GM12878 (cell line): ENCODE measurements at regions of chr1 and their contacts with region 1.

Region 1: GRCh38 chr1:25904943-25905679 is 1.1 kb downstream of the STMN1 start:
- DNase-seq: peak; percentile 63
- ATAC-seq: peak; percentile 91
- H3K4me3 ChIP-seq: peak overlapping the region; percentile 100
- H3K27ac ChIP-seq: peak overlapping the region; percentile 94
- H3K4me1 ChIP-seq: peaks cover 5% of the 10 kb centered on the region; the same call in 1 of the 2 replicates
- H3K27me3 ChIP-seq: no peaks in the 10 kb centered on the region; a peak in 3 of 4 replicates
- CTCF ChIP-seq: peak in 1 of 3 experiments; percentile 24; a peak in 1 of 6 replicates
- EP300 ChIP-seq: no peak
- POLR2A ChIP-seq: no peak
- RAD21 ChIP-seq: no peak

Region 2: DNA sequence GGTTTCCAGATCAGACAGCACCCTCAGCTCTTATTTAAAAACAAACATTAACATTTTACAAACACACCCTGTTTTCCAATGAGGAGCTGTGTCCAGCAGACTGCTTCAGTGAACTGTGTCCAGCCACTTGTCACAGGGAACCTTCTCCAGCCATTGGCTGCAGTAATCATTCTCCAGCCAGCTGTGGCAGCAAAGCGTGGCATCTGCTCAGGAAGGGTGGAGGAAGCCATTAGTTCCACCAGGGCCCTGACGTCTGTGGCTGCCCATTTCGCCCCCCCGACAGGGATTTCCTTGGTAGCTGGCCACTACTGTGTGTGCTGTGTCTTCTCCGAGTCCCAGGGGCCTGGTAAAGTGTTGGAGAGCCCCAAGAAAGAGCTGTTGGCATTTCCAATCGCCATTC is 168.0 kb before region 1 on chr1:
- CTCF ChIA-PET with region 1: no interaction called
- POLR2A ChIA-PET with region 1: no interaction called
- RAD21 ChIA-PET with region 1: no interaction called
- SMC1A ChIA-PET with region 1: no interaction called
- in situ Hi-C with region 1: no loop called
- intact Hi-C with region 1: no loop called
- DNase-seq: no peak
- ATAC-seq: no peak; the same call in 2 of the 3 replicates
- H3K4me3 ChIP-seq: no peak overlapping the region
- H3K27ac ChIP-seq: no peak overlapping the region
- H3K4me1 ChIP-seq: no peaks in the 10 kb centered on the region
- H3K27me3 ChIP-seq: peaks cover 4 to 6% of the 10 kb centered on the region in 2 experiments
- CTCF ChIP-seq: no peak
- EP300 ChIP-seq: no peak
- POLR2A ChIP-seq: no peak
- RAD21 ChIP-seq: no peak

Region 3: GRCh38 chr1:25874934-25875855 is 29.9 kb before region 1 on chr1 and contains the start of gene PAQR7:
- CTCF ChIA-PET with region 1: interaction called, 11 read pairs
- POLR2A ChIA-PET with region 1: interaction called, 26 read pairs
- RAD21 ChIA-PET with region 1: interaction called, 3 read pairs
- SMC1A ChIA-PET with region 1: interaction called, 8 read pairs
- in situ Hi-C with region 1: no loop called
- intact Hi-C with region 1: no loop called
- DNase-seq: no peak
- ATAC-seq: peak; percentile 86
- H3K4me3 ChIP-seq: peak within 1 kb of the TSS; percentile 76
- H3K27ac ChIP-seq: peak within 1 kb of the TSS; percentile 27
- H3K4me1 ChIP-seq: peaks cover 34% of the 10 kb centered on the region
- H3K27me3 ChIP-seq: no peaks in the 10 kb centered on the region; a peak in 1 of 4 replicates
- CTCF ChIP-seq: no peak
- EP300 ChIP-seq: no peak
- POLR2A ChIP-seq: peak; percentile 51; the same call in 1 of the 2 replicates
- RAD21 ChIP-seq: no peak
- polyA plus RNA-seq, gene PAQR7: 1.1 to 2.5 TPM

Region 4: DNA sequence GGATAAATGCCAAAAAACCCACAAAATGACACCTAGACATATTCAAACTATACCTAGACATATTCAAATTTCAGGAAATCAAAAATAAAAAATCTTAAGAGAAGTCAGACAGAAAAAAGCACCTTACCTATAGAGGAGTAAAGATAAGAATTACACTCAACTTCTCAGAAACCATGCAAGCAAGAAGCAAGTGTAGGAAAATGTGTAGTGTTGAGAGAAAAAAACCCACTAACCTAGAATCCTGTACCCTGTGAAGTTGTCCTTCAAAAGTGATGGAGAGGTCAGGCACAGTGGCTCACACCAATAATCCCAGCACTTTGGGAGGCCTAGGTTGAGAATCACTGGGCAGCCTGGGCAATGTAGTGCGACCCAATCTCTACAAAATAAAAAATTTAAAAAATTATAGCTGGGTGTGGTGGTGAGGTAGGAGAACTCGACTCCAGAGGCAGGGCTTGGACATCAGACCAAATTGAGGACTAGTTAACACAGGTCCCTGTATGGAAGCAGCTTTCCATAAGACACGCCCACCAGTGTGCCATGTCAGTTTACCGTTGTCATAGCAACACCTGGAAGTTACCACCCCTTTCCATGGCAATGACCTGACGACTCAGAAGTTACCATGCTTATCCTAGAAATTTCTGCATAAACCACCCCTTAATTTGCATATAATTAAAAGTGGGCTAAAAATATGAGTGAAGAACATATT is 227.2 kb after region 1 on chr1:
- CTCF ChIA-PET with region 1: no interaction called
- POLR2A ChIA-PET with region 1: no interaction called
- RAD21 ChIA-PET with region 1: no interaction called
- SMC1A ChIA-PET with region 1: no interaction called
- in situ Hi-C with region 1: no loop called
- intact Hi-C with region 1: no loop called
- DNase-seq: no peak
- ATAC-seq: no peak
- H3K4me3 ChIP-seq: no peak overlapping the region
- H3K27ac ChIP-seq: no peak overlapping the region
- H3K4me1 ChIP-seq: no peaks in the 10 kb centered on the region
- H3K27me3 ChIP-seq: no peaks in the 10 kb centered on the region
- CTCF ChIP-seq: no peak
- EP300 ChIP-seq: no peak
- POLR2A ChIP-seq: no peak
- RAD21 ChIP-seq: no peak